Sciatic nerve (tissue), 2 donors: ENCODE measurements at regions of chr1 and their contacts with region 1.

Region 1: DNA sequence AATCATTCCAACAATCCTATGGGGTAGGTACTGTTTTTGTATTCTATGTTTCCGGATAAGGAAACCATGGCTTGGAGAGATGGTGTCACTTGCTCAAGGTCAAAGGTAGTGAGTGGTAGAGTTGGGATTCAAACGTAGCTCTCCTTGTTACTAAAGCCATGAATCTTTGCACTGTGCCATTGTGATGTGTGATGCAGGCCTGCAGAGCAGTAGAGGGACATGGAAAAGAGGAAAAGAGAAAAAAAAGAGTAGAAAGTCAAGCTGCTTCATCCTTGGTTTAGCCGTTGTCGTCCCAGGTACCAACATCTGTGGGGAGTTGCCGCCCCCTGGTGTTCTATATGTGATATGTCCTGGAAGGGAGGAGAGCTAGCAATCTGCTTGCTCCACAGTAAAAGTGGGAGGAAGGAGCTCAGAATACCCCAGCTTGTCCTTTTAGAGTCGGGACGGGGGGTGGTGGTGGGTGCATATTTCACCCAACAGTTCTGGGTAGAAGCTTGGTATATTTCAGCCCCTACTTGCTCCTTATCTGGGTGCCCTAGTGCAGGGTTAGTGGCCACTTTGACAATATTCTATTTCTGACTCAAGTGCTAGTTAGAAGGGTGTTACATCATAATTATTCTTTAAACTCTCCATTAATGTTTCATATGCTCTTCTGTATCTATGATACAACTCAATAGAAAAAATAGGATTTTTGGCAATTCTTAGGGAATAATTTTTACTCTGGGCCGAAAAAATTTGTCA is 98.4 kb downstream of the EBNA1BP2 start:
- DNase-seq: peak; percentile 82
- ATAC-seq: peak; percentile 85

Region 2: DNA sequence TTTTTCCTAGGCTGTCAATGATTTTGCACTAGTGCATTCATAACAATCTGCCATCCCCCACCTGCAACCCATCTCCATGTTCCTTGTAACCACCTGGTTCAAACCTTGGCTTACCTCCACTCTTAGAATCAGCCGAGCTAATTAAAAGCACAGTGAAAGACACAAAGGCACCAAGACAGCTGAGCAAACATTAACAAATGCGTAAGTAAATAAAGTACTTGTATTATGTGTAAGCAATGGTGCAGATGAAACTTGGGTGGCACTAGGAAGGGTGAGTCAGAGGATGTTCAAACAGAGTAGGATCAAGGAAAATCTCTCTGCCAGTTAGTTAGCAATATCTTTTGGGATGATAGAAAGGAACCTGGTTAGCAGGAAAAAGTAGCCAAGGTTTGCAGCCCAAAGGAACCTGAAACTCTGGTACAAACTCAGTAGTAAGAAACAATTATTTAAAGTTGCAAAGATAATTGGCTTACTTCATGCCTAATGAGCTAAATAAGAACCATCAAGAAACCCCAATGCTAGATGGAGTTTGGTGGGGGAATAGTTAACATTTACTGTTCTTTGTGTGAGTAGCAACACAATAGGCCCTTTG is 733.5 kb before region 1 on chr1:
- intact Hi-C with region 1: no loop called
- DNase-seq: no peak
- ATAC-seq: no peak

Region 3: DNA sequence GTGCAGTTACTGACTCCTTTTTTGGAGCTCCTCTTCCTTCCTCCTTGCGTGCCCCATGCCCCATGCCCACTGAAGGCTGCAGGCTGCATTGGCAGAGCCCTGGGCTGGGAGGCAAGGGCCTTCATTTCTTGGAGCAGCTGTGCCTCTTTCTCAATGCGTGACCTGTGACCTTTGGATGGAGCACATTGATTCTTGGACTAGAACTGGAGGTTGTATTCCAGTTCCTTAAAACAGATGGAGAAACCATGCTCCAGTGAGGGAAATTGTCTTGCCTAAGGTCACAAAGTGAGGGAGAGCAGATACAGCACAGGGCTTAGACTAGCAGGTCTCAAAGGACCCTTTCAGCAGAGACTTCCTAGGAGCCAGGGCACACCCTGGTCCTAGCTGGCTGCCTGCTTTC is 279.8 kb before region 1 on chr1:
- intact Hi-C with region 1: loop called (anchors 10 kb)
- DNase-seq: no peak
- ATAC-seq: peak; percentile 89

Region 4: DNA sequence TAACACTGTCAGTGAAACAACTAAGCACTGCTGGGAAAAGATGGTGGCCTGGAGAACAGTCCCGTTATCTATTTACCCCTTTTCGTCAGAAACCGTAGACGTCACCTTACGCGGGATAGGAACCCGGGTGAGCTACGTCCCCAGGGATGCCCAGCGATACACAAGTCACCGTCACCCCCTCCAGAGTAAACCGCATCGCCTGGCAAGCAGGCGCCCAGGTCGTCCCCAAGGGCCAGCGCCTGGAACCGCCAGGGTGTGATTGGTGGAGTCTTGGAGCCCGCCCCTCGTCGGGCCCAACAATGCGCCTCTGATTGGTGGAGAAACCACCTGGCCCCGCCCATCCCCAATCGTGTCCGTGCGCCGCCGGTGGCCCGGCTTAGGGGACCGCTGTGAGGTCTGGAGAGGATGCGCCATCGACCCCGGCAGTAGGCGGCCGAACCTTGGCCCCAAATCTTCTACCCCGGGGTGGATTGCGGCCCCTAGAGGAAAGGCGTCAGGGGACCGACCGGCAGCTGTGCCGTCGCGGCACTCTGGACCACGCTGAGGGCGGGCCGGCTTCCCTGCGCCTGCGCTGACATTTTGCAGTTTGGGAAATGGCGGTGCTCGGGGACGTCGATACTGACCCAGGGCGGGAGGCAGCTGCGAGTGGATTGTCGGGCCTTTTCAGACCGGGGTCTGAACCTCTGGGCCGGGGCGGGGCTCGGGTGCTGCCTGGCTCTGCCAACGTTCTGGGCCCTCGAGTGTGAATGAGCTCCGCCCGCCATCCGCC is 149.4 kb before region 1 on chr1:
- intact Hi-C with region 1: loop called (anchors 5 kb)
- DNase-seq: peak; percentile 97
- ATAC-seq: peak; percentile 90